Aorta (tissue), 5 donors: ENCODE measurements at regions of chr11 and their contacts with region 1.

Region 1: DNA sequence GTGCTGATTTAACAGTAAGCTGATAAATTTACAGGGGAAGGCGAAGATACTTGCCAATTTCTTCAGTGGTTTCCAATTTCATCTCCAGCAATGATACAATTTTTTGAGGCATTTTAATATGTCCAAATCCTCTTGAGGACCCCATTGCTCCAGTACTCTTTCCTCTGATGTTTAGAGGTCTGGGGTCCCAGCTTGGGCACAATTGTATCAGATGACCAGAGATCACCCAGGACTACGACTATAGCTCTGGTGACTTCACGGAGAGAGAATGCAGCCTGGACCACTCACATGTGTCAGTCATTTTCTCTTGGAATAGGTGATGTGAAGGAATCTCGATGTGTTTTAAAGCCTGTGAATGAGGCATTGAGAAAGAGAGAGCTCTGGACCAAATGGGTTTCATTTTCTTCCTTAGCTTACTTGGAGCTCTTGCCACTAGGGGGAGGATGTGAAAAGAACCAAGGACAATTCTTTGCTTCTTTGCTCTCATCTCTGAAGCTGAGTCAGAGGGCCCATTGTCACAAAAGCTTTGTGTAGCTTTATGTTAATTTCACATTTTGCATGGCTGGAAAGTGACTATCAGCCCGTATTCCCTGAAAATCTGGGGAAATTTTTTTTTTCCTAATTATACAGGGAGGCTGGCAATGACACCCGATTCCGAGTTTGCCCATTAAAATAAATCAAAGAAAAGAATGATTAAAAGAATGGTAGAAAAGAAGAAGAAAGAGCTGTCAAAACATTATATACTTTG is 6.7 kb upstream of the CCDC90B start:
- DNase-seq: no peak
- ATAC-seq: peak; percentile 76
- H3K4me3 ChIP-seq: no peak overlapping the region
- H3K27ac ChIP-seq: no peak overlapping the region
- H3K4me1 ChIP-seq: no peaks in the 10 kb centered on the region
- H3K27me3 ChIP-seq: no peaks in the 10 kb centered on the region

Region 2: DNA sequence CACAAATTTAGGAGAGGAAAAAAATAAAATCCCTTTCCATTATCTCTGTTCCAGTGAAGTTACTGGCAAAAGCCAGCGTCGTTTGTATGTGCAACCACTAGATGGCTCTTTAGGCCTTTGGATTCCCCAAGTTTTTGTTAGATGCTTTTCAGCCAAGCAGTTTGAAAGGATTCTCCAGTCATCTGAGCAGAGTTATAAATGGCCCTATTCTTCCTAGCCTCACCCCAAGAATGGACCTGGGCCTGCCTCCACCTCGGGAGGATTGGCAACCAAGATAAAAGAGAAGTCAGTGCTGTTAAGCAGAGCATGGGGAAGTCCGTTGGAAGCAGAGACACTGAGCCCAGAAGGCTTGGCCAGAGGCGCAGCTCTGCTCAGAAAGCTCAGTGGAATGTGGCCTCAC is 574.6 kb before region 1 on chr11:
- intact Hi-C with region 1: loop called in 1 of 2 experiments (anchors 10 kb)
- DNase-seq: peak in 1 of 2 donors; percentile 46
- ATAC-seq: peak; percentile 85
- H3K4me3 ChIP-seq: no peak overlapping the region
- H3K27ac ChIP-seq: no peak overlapping the region
- H3K4me1 ChIP-seq: peaks cover 9% of the 10 kb centered on the region in 2 donors
- H3K27me3 ChIP-seq: no peaks in the 10 kb centered on the region

Region 3: DNA sequence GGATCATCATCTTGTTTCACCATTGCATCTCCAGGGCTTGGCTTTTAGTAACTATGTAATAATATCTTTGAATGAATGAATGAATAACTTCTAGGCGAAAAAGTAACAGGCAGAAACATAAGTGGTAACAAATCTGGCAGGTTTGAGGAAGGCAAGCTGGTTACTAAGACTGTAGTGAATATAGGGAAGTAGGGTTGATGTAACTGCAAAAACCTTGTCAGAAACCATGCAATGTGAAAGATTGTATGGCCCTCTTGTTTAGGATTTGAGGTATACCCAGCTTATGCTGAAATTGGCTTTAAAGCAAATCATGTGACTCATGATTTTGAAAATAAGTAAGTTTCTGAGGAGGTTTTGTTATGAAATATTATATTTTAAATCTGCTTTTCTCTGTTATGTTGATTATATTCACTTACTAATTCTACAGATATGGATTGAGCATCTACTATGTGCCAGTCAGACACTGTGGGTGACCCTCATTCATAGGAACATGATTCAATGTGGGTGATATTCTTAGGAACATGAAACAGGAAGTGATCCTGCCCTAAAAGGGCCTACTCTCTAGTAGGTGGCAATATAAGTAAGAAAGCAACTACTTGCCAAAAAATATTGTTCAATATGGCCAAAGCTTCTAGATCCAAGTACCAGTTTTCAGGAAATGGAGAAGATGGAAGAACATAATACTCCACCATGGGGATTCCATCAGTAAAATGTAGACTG is 108.8 kb after region 1 on chr11:
- intact Hi-C with region 1: no loop called
- DNase-seq: no peak
- ATAC-seq: no peak
- H3K4me3 ChIP-seq: no peak overlapping the region
- H3K27ac ChIP-seq: no peak overlapping the region
- H3K4me1 ChIP-seq: no peaks in the 10 kb centered on the region
- H3K27me3 ChIP-seq: no peaks in the 10 kb centered on the region

Region 4: GRCh38 chr11:83724008-83724461 is 431.2 kb after region 1 on chr11:
- intact Hi-C with region 1: loop called (anchors 5 kb)
- DNase-seq: no peak
- ATAC-seq: peak; percentile 64
- H3K4me3 ChIP-seq: peak overlapping the region; percentile 47 to 69
- H3K27ac ChIP-seq: no peak overlapping the region
- H3K4me1 ChIP-seq: no peaks in the 10 kb centered on the region
- H3K27me3 ChIP-seq: no peaks in the 10 kb centered on the region